ENCODE measurements at regions of chr11 and their contacts with region 1.

Region 1: DNA sequence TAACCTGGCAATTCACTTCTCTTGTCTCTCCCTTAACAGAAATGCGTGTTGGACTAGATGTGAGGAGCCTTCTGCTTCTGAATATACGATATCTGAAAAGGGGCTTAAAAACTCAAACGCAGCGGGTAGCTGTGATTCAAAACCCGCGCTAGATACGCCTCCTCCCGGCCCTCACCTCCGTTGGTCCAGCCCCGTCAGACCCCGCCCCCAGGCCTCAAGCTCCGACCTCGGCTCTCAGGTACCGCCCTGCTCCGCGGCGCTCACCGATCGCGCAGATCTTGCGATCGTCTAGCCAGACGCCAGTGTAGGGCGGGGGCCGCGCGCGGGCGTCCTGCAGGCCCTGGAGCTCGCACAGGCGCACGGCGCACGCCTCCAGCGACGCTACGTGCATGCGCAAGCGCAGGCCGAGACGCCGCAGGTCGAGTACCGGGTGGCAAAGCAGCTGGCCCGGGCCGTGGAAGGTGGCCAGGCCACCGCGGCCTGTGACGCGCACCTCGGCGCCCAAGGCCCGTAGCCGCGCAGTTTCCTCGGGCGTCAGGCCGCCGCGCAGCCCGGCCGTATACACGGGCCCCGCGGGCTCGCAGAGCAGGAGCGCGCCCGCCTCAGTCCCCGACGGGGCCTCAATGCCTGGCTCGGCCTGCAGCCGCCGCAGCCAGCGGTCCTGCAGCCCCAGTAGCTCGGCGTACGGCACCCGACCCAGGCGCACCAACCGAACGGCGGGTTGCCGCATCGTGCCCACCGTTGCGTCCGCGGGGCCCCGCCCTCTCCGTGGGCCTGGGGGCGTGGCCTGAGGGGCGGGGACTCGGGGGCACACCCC is at the start of gene LIPT2:
- DNase-seq: peak; percentile 86 to 99 (median 96)
- ATAC-seq: peak; percentile 95 to 96
- H3K4me3 Mint-ChIP-seq: peak within 1 kb of the TSS; percentile 71 to 92 (median 88)
- H3K27ac Mint-ChIP-seq: peak within 1 kb of the TSS; percentile 68 to 97 (median 94)
- H3K4me1 Mint-ChIP-seq: peaks cover 17 to 22% (median 19%) of the 10 kb centered on the region in 4 donors
- H3K27me3 Mint-ChIP-seq: no peaks in the 10 kb centered on the region
- polyA plus RNA-seq, gene LIPT2: 17.8 to 23.5 (median 19.7) TPM

Region 2: DNA sequence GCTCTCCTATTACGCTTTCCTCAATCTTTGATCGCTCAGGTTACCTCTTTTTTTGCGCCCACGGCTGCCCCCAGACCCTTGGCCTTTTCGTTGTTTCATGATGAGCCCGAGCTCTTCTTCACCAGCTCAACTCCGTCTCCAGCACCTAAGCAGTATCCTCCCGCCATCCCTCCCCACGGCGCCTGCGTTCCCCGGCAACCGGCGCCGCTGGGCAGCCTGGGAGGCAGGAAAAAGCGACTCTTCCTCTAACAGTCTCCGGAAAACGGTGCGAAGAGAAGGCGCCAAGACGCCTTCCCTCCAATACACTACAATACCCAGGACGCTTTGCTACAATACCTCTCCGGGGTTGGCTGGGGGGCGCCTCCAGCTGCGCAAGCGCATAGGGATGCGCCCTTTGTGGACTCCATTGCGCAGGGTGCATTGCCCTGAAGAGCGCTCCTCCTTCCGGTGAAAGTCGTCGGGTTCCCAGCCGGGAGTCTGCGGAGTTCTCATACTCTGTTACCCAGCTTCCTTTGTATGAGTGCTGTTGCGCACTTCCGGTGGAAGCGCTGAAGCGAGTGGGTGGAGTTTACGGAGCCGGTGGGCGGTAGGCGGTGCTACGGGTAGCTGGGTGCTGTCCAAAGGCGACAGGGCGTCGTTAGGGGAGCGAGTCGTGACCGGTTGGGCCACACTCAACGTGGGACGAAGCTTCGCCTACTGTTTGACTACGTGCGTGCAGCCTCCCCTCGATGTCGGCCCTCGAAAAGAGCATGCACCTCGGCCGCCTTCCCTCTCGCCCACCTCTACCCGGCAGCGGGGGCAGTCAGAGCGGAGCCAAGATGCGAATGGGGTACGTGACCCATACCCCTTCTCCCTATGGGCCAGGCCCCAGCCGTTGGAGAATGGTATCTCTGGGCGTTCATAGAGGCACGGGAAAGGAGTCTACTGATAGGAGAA is 322.2 kb before region 1 on chr11 and contains the starts of genes C2CD3 and PPME1:
- POLR2A ChIA-PET with region 1: interaction called, 16 read pairs
- DNase-seq: peak; percentile 93 to 99 (median 98)
- ATAC-seq: peak; percentile 94 to 96
- H3K4me3 Mint-ChIP-seq: no peak within 1 kb of the TSS
- H3K27ac Mint-ChIP-seq: no peak within 1 kb of the TSS
- H3K4me1 Mint-ChIP-seq: peaks cover 5 to 29% (median 14%) of the 10 kb centered on the region in 4 donors
- H3K27me3 Mint-ChIP-seq: no peaks in the 10 kb centered on the region
- polyA plus RNA-seq, gene C2CD3: 4.1 to 12.1 (median 6.2) TPM
- polyA plus RNA-seq, gene PPME1: 10.3 to 14.2 (median 10.9) TPM

Region 3: GRCh38 chr11:74398244-74399159 is 94.7 kb before region 1 on chr11 and contains the start of gene PGM2L1:
- POLR2A ChIA-PET with region 1: interaction called, 28 read pairs
- DNase-seq: peak; percentile 88 to 98 (median 93)
- ATAC-seq: peak; percentile 83 to 87
- H3K4me3 Mint-ChIP-seq: peak within 1 kb of the TSS; percentile 95 to 100 (median 100)
- H3K27ac Mint-ChIP-seq: peak within 1 kb of the TSS; percentile 94 to 99 (median 98)
- H3K4me1 Mint-ChIP-seq: peaks cover 10 to 25% (median 20%) of the 10 kb centered on the region in 4 donors
- H3K27me3 Mint-ChIP-seq: no peaks in the 10 kb centered on the region
- polyA plus RNA-seq, gene PGM2L1: 2.8 to 2.9 (median 2.9) TPM

Region 4: DNA sequence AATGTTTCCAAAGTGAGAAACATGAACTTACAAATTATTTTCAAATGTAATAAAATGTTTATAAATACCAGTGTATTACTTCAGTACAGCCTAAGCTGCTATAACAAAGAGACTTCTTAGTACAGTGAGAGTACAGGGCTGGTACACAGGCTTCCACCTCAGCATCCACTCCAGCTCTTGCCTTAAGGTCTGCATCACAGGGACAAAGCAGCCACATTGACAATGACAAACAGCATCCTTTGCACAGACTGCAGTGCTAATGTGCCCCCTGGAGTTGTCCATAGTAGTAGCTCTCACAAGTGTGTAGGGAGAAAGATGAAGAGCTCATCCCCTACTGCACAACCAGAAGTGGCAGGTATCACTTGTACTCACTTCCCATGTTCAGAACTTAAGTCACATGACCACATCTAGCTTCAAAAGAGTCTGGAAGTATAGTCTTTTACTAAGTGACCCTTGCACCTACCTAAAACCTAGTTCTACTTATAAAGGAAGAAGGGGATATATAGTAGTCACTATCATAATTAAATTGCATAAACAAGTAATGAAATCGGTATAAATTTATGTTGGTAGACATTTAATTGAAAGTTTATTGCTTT is 11.0 kb after region 1 on chr11:
- POLR2A ChIA-PET with region 1: interaction called, 12 read pairs
- DNase-seq: no peak
- ATAC-seq: no peak
- H3K4me3 Mint-ChIP-seq: no peak overlapping the region
- H3K27ac Mint-ChIP-seq: no peak overlapping the region
- H3K4me1 Mint-ChIP-seq: peaks cover 0 to 2% (median 0%) of the 10 kb centered on the region in 4 donors
- H3K27me3 Mint-ChIP-seq: peaks cover 0 to 5% (median 0%) of the 10 kb centered on the region in 5 donors

Region 5: GRCh38 chr11:74592441-74593362 is 99.5 kb after region 1 on chr11 and contains the start of gene POLD3:
- POLR2A ChIA-PET with region 1: interaction called, 21 read pairs
- DNase-seq: peak; percentile 84 to 97 (median 92)
- ATAC-seq: peak; percentile 95
- H3K4me3 Mint-ChIP-seq: peak within 1 kb of the TSS; percentile 90 to 99 (median 97)
- H3K27ac Mint-ChIP-seq: peak within 1 kb of the TSS; percentile 93 to 98 (median 96)
- H3K4me1 Mint-ChIP-seq: peaks cover 8 to 32% (median 26%) of the 10 kb centered on the region in 4 donors
- H3K27me3 Mint-ChIP-seq: no peaks in the 10 kb centered on the region
- polyA plus RNA-seq, gene POLD3: 12.0 to 17.4 (median 16.9) TPM

Region 6: DNA sequence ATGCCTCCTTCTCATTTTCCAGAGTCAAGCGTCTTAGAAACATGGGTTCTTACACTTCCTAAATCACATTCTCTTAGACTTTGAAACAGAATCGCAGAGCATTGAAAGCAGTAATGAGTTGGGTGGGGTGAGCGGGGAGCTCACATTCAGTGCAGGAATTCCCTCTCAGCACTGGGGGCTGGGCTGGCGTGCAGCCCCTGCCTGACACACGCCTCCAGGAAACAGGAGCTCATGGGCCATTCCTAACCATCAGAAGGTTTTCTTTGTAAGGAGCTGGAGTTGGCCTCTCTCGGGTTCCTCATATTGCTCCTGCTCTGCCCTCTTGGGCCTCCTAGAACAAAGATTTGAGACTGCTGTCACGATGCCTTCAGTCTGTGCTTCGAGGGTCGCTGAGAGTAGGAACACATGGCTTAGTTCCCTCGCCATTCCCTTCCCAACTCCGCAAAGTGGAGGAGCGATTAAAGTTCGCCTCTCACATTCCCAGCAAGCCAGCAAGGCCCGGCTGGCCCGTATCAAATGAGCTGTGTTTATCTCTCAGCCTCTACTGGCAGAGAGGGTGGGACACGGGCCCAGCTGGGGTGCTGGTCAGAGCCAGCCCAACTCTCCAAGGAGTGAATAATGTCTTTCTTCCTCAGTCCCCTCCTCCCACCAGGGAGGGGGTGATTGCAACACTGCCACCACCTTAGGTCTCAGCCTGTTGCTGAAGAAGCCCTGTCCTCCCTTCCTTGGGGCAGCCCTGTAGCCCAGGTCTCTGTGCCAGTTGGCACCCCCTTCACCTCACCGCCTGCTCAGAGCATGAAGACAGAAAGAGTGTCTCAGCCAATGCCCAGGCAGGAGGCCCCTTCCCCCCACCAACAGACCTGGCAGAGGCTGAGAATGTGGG is 227.7 kb after region 1 on chr11:
- POLR2A ChIA-PET with region 1: no interaction called
- DNase-seq: peak in 1 of 10 donors; percentile 37
- ATAC-seq: no peak
- H3K4me3 Mint-ChIP-seq: no peak overlapping the region
- H3K27ac Mint-ChIP-seq: no peak overlapping the region
- H3K4me1 Mint-ChIP-seq: no peaks in the 10 kb centered on the region
- H3K27me3 Mint-ChIP-seq: peaks cover 0 to 15% (median 9%) of the 10 kb centered on the region in 5 donors

Region 7: DNA sequence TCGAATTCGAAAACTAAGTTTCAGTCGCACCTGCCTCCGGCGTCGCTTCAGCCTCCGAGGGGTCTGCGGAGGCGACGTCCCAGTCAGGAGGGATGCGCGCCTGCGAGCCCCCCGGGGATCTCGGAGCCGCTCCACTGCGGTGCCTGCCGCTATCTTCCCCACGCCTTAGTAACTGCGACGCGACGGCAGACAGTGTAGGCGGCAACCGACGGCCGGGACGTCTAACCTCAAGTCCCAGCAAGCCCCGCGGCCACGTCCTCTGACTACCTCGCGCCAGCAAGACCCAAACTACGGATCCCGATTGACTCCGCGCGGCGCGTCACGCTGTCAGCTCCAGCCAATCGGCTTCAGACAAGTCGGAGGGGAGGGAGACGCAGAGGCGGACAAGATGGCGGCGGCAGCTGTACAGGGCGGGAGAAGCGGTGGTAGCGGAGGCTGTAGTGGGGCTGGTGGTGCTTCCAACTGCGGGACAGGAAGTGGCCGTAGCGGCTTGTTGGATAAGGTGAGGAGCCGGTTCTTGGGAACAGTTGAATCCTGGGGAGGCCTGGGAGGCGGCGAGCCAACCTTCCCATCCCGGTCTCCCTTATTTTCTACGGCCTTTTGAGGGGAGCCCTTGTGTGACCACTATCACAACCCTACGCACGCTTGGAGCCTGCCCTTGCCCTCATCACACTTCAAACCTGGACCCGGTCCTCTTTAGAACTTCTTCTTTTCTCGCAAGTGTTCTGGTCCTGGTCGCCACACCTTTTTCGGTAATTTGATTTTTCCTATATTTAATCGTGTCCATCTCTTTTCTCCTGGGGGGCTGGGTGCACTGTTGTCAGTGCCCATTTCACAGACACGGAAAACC is 455.9 kb after region 1 on chr11 and contains the starts of genes SPCS2 and XRRA1:
- POLR2A ChIA-PET with region 1: interaction called, 11 read pairs
- DNase-seq: peak; percentile 92 to 99 (median 97)
- ATAC-seq: peak; percentile 96 to 98
- H3K4me3 Mint-ChIP-seq: peak within 1 kb of the TSS; percentile 90 to 100 (median 96)
- H3K27ac Mint-ChIP-seq: peak within 1 kb of the TSS; percentile 91 to 99 (median 95)
- H3K4me1 Mint-ChIP-seq: peaks cover 29 to 54% (median 53%) of the 10 kb centered on the region in 4 donors
- H3K27me3 Mint-ChIP-seq: peaks cover 0 to 2% (median 0%) of the 10 kb centered on the region in 5 donors
- polyA plus RNA-seq, gene SPCS2: 137 to 198 (median 173) TPM
- polyA plus RNA-seq, gene XRRA1: 7.2 to 14.2 (median 14.0) TPM

Measured in naive thymus-derived CD8-positive, alpha-beta T cell (primary cell).